Posterior cingulate gyrus (tissue), 11 donors: ENCODE measurements at regions of chr17 and their contacts with region 1.

Region 1: GRCh38 chr17:58631523-58632323 is 60.1 kb downstream of the TEX14 start:
- DNase-seq: peak; percentile 90 to 99 (median 98)

Region 2: GRCh38 chr17:58587702-58588254 is 43.9 kb before region 1 on chr17:
- intact Hi-C with region 1: loop called (anchors 5 kb)
- DNase-seq: peak in 7 of 10 donors; percentile 11 to 89 (median 58)

Region 3: GRCh38 chr17:58658804-58659713 is 27.3 kb after region 1 on chr17:
- intact Hi-C with region 1: loop called (anchors 1 kb)
- DNase-seq: peak in 9 of 10 donors; percentile 24 to 92 (median 70)

Region 4: GRCh38 chr17:59062509-59062908 is 430.8 kb after region 1 on chr17:
- intact Hi-C with region 1: no loop called
- DNase-seq: no peak